ENCODE measurements at regions of chr1 and their contacts with region 1.

Region 1: DNA sequence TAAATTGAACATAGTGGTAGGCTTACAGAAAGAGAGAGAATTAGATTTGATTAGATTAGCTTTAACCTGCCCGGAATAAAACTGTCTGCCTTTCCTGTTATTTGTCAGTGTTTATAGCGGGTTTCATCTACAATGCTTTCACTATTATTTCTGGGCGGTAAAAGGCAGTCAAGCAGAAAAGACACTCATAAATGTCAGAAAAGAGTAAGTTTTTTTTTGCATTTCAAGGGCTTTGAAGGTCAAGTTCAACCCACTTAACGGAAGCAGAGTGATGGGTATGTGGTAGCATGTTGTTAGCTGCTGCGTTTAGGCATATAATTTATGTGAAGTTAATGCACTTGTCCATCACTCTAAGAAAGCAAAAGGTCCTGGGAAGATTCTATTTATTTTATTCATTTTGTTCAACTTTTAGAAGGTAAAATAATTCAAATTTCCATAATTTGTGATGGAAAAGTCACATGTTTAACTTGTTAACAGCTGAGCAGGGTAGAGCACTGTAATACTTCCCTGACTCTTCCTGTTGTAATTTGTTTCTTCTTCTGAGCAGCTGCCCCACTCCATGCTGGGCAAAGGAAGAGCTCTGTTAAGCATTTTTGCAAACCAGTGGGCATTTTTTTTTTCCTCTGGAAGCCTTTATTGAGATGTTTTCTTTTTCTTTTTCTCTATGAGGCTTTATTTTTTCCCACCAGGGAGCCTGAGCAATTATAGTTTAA is 220.1 kb downstream of the ST6GALNAC3 start:
- DNase-seq: peak; percentile 87
- H3K4me3 ChIP-seq: peak overlapping the region; percentile 62
- H3K27ac ChIP-seq: peak overlapping the region; percentile 95
- H3K4me1 ChIP-seq: peaks cover 86% of the 10 kb centered on the region
- CTCF ChIP-seq: no peak

Region 2: GRCh38 chr1:75724472-75725022 is 570.1 kb before region 1 on chr1 and contains the start of gene ACADM:
- CTCF ChIA-PET with region 1: no interaction called
- POLR2A ChIA-PET with region 1: interaction called, 3 read pairs
- intact Hi-C with region 1: loop called (anchors 5 kb)
- DNase-seq: peak; percentile 91
- H3K4me3 ChIP-seq: peak within 1 kb of the TSS; percentile 90
- H3K27ac ChIP-seq: peak within 1 kb of the TSS; percentile 95
- H3K4me1 ChIP-seq: peaks cover 34% of the 10 kb centered on the region
- CTCF ChIP-seq: no peak
- total RNA-seq, gene ACADM: 137 and 160 TPM in 2 replicates

Region 3: DNA sequence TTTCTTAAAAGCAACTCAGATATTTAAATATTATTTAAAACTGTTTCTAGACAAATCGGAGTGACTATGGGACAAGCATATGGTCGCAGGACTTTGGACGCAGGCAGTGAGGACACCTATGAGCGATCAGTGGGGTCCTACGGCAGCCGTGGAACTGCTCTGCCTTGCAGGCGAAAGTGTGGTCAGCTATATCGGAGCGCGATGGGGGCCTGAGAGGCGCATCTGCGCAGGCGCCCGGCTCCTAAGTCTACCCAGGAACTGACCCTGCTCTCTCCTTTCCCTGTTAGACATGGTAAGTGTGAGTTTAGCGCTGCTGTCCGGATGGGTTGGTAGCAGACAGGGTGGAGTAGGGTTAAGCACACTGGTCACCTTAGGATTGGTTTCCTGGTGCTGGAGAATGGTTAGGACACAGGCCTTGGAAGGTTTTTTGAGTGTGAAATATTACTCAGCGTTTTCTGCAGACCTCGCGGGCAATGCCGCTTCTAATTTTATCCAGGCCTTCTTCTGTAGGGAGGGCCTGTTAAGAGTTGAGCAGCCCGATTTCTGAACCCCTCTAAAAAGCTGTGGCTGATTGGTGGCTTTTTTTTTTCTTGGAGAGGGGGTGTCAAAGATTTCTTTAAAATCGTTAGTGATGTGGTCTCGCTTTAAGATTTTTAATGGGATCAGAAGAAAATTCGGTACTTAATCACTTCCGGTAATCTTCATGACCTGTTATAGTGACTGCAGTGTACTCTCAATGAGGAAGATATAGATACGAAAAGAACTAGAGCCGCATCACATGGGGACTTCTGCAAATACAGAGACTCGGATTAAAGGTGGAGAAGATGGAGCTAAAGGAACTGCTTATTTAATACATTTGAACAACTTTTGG is 508.4 kb before region 1 on chr1 and contains the start of gene RABGGTB:
- CTCF ChIA-PET with region 1: no interaction called
- POLR2A ChIA-PET with region 1: no interaction called
- intact Hi-C with region 1: loop called (anchors 5 kb)
- DNase-seq: peak; percentile 98
- H3K4me3 ChIP-seq: peak within 1 kb of the TSS; percentile 93
- H3K27ac ChIP-seq: peak within 1 kb of the TSS; percentile 94
- H3K4me1 ChIP-seq: peaks cover 41% of the 10 kb centered on the region
- CTCF ChIP-seq: no peak
- total RNA-seq, gene RABGGTB: 128 and 132 TPM in 2 replicates

Region 4: DNA sequence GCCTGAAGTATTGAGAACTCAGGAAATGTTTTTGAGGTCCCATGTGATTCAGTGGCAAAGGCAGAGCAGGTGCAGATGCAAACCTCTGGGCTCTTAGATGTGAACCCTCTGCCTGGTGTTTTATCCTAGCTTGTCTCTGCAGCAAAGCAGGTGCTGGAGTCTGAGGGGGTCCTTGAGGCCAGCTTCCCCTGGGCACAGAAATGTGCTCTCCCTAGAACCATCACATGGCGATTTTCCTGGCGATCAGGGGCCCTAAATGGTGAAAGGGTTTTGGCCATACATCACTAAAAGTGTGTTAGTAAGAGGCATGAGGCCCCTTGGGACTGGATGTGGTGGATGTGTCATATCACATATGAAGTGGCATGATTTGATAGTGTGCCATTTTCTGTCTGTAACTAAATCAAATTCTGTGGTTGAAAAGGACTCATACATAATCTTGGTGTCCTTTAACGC is 75.2 kb before region 1 on chr1:
- CTCF ChIA-PET with region 1: no interaction called
- POLR2A ChIA-PET with region 1: interaction called, 13 read pairs
- intact Hi-C with region 1: loop called (anchors 5 kb)
- DNase-seq: peak; percentile 82
- H3K4me3 ChIP-seq: peak overlapping the region; percentile 35
- H3K27ac ChIP-seq: peak overlapping the region; percentile 83
- H3K4me1 ChIP-seq: peaks cover 36% of the 10 kb centered on the region
- CTCF ChIP-seq: no peak

Region 5: DNA sequence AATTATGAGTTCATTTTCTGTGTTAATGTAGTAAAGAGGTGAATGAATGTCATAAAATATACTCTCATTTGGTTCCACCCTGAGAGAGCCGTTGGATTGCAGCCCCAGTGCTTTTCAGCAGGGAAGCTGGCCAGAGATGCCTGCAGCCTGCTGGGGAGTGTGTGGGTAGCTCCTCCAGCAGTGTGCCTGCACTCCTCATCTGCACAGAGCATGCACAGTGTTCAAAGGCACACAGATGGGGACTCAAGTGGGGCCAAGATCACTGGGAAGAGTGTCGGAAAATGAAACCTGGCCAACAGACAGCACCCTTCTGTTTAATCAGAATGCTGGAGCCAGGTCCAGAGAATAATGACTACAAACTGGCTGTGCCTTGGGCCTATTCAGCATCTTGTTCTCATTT is 13.3 kb before region 1 on chr1:
- CTCF ChIA-PET with region 1: interaction called, 3 read pairs
- POLR2A ChIA-PET with region 1: interaction called, 24 read pairs
- intact Hi-C with region 1: no loop called
- DNase-seq: no peak
- H3K4me3 ChIP-seq: no peak overlapping the region
- H3K27ac ChIP-seq: no peak overlapping the region
- H3K4me1 ChIP-seq: peaks cover 32% of the 10 kb centered on the region
- CTCF ChIP-seq: no peak

Region 6: GRCh38 chr1:76317299-76317900 is 22.8 kb after region 1 on chr1:
- CTCF ChIA-PET with region 1: no interaction called
- POLR2A ChIA-PET with region 1: interaction called, 11 read pairs
- intact Hi-C with region 1: no loop called
- DNase-seq: no peak
- H3K4me3 ChIP-seq: no peak overlapping the region
- H3K27ac ChIP-seq: no peak overlapping the region
- H3K4me1 ChIP-seq: no peaks in the 10 kb centered on the region
- CTCF ChIP-seq: no peak

Measured in OCI-LY7 (cell line).